ENCODE measurements at regions of chr3 and their contacts with region 1.

Region 1: DNA sequence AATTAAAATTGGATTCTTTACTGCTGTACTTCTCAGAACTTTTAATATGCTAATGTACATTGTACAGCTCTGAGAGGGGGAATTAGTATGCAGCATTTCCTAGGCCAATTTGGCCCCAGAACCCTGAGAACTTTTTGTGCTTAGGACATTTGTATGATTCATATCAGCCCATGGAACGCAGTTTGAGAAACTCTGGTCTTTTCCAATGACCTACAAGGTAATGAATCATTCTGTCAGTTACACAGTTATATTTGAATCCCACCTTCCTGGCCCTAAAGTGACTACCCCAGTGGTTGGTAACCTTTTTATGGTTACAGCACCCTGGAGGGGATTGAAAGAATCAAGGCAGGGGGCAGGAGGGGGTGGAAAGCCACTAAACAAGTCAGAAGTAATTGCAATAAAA is 25.6 kb upstream of the KBTBD12 start:
- DNase-seq: no peak
- ATAC-seq: no peak
- H3K4me3 Mint-ChIP-seq: no peak overlapping the region
- H3K27ac Mint-ChIP-seq: no peak overlapping the region
- H3K4me1 Mint-ChIP-seq: peaks cover 8% of the 10 kb centered on the region
- H3K27me3 Mint-ChIP-seq: no peaks in the 10 kb centered on the region
- CTCF ChIP-seq: no peak

Region 2: DNA sequence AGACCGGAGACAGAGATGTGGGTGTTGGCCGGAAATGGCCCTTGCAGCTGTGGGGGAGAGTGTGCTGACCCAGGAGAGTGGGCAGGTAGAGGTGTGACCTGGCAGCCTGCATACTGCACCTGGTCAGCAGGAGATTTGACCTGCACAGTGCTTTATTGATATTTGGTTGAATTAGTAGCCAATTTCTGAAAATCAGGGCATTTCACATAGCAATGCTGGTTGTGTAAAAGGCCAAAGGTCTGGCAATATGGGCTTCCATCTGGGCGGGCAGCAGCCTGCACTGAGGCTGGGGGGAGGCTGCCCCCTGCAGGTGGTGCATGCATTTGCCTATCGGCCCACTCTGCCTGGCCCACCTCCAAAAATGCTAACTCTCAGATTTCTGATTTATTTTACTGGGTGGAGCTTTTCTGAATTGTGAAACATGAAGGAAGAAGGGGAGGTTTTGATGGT is 57.7 kb before region 1 on chr3:
- CTCF ChIA-PET with region 1: no interaction called
- POLR2A ChIA-PET with region 1: no interaction called
- intact Hi-C with region 1: loop called (anchors 5 kb)
- DNase-seq: peak; percentile 32
- ATAC-seq: no peak
- H3K4me3 Mint-ChIP-seq: no peak overlapping the region
- H3K27ac Mint-ChIP-seq: no peak overlapping the region
- H3K4me1 Mint-ChIP-seq: peaks cover 40% of the 10 kb centered on the region
- H3K27me3 Mint-ChIP-seq: no peaks in the 10 kb centered on the region
- CTCF ChIP-seq: no peak

Measured in activated B cell treated with CpG ODN at 0.5 μM for 24 hours (primary cell).